MCF 10A (cell line): ENCODE measurements at regions of chr2 and their contacts with region 1.

Region 1: DNA sequence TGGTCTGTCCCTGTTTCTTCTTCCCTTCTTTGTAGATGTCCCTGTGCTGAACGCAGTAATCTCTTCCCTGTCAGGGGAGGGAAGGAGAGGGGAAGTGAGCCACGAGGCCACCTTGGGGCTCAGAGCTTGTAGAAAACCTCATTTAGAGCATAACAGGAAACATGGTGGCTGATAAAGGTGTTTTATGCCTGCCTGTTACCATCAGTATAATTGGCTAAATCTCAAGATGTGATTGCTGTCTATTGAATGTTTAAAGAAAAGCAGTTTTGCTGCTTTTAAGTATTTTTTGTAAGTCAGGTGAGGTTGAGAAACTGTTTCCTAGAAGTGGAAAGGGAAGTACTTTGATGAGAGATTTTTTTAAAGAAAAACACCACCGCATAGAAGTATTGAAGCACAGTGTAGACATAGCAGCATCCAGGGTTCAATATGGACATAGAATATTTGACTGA is 59.7 kb upstream of the PDK1 start:
- DNase-seq: no peak
- H3K4me3 Mint-ChIP-seq: no peak overlapping the region
- H3K27ac Mint-ChIP-seq: no peak overlapping the region
- H3K4me1 Mint-ChIP-seq: no peaks in the 10 kb centered on the region
- H3K27me3 Mint-ChIP-seq: no peaks in the 10 kb centered on the region
- CTCF ChIP-seq: no peak

Region 2: DNA sequence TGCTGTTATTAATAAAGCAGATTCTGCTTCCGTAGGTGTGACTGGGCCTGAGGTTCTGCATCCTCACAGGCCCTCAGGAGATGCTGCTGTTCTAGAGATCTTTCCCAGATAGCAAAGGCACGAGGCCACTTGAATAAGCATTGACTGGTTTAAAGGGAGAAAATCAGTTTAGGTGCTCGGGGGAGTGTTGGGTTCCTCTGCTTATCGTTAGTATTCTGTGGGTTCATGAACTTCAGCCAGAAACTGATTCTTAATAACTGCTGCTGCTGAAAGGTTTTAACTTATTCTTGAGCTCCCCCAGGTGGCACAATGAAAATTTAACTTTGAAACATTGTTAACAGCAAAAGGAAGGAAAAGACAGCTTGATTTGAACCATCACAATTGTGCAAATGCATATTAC is 11.9 kb before region 1 on chr2:
- CTCF ChIA-PET with region 1: interaction called, 12 read pairs
- POLR2A ChIA-PET with region 1: interaction called, 3 read pairs
- intact Hi-C with region 1: no loop called
- DNase-seq: no peak
- H3K4me3 Mint-ChIP-seq: no peak overlapping the region
- H3K27ac Mint-ChIP-seq: peak overlapping the region; percentile 3
- H3K4me1 Mint-ChIP-seq: peaks cover 13% of the 10 kb centered on the region
- H3K27me3 Mint-ChIP-seq: no peaks in the 10 kb centered on the region
- CTCF ChIP-seq: no peak